CD4-positive, alpha-beta memory T cell (primary cell): ENCODE measurements at regions of chr11 and their contacts with region 1.

Region 1: DNA sequence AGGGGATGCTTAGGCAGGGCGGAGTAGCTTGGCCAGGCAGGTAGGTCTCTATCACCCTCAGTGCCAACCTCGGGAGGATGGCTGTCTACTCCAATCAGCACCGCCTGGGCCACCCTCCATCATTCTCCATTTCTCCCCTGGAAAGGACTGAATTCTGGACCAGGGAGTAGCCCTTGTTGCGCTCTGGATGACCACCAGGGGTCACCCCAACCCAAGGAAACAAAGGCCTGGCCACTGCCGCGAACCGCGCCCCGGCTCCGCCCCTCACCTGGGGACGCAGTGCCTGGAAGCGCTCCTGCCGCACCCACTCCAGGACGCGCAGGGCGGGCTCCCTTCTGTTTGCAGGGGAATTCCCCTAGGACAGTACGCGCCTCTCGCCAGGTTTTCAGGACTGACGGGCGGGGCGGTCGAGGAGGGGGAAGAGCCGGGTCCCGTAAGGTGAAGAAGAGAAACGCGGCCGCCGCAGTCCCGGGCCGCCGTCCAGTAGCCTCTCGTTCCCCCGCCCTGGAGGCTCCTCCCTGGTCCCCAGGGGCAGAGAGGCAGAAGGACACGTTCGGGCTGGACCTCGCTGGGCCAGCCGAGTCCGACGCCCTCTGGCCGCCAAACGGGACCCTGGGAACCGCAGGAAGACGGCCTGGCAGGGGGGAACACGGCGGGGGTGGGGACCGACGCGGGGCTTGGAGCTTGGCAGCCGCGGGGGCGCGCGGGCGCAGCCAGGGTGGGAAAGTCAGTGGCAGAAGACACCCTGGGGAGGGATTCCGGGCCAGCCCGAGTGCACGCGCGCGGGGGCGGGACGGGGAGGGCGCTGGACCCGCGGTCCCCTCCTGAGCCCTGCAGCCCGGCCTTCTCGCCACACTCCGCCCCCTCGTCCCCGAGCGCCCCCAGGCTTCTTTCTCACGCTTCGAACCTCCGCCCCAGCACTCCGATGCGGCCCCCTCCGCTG is 7.1 kb downstream of the SCN4B start:
- DNase-seq: peak; percentile 81 to 90 (median 86)
- H3K4me3 ChIP-seq: peak overlapping the region; percentile 43 to 62
- H3K4me3 Mint-ChIP-seq: peak overlapping the region; percentile 63 to 93 (median 85)
- H3K27ac ChIP-seq: no peak overlapping the region
- H3K27ac Mint-ChIP-seq: peak overlapping the region in 4 of 7 donors; percentile 41 to 88 (median 78)
- H3K4me1 ChIP-seq: peaks cover 4% of the 10 kb centered on the region
- H3K4me1 Mint-ChIP-seq: peaks cover 2 to 5% (median 4%) of the 10 kb centered on the region in 4 donors
- H3K27me3 ChIP-seq: peaks cover 13% of the 10 kb centered on the region
- H3K27me3 Mint-ChIP-seq: peaks cover 34 to 46% of the 10 kb centered on the region in 2 donors

Region 2: GRCh38 chr11:118290923-118291322 is 145.4 kb after region 1 on chr11:
- CTCF ChIA-PET with region 1: interaction called, 12 read pairs
- POLR2A ChIA-PET with region 1: interaction called, 3 read pairs
- intact Hi-C with region 1: loop called (anchors 1 kb)
- DNase-seq: peak; percentile 46 to 61 (median 49)
- H3K4me3 ChIP-seq: no peak overlapping the region
- H3K4me3 Mint-ChIP-seq: peak overlapping the region in 1 of 8 donors; percentile 40
- H3K27ac ChIP-seq: no peak overlapping the region
- H3K27ac Mint-ChIP-seq: peak overlapping the region in 2 of 7 donors; percentile 18 to 36
- H3K4me1 ChIP-seq: peaks cover 4% of the 10 kb centered on the region
- H3K4me1 Mint-ChIP-seq: peaks cover 8 to 13% (median 10%) of the 10 kb centered on the region in 4 donors
- H3K27me3 ChIP-seq: no peaks in the 10 kb centered on the region
- H3K27me3 Mint-ChIP-seq: no peaks in the 10 kb centered on the region

Region 3: GRCh38 chr11:118353084-118353710 is 207.6 kb after region 1 on chr11:
- CTCF ChIA-PET with region 1: no interaction called
- POLR2A ChIA-PET with region 1: no interaction called
- intact Hi-C with region 1: loop called (anchors 5 kb)
- DNase-seq: peak in 4 of 5 donors; percentile 53 to 64 (median 63)
- H3K4me3 ChIP-seq: no peak overlapping the region
- H3K4me3 Mint-ChIP-seq: no peak overlapping the region
- H3K27ac ChIP-seq: peak overlapping the region; percentile 44
- H3K27ac Mint-ChIP-seq: peak overlapping the region; percentile 86 to 96 (median 93)
- H3K4me1 ChIP-seq: peaks cover 22% of the 10 kb centered on the region
- H3K4me1 Mint-ChIP-seq: peaks cover 22 to 29% (median 24%) of the 10 kb centered on the region in 4 donors
- H3K27me3 ChIP-seq: no peaks in the 10 kb centered on the region
- H3K27me3 Mint-ChIP-seq: no peaks in the 10 kb centered on the region

Region 4: GRCh38 chr11:118488480-118489109 is 343.0 kb after region 1 on chr11:
- CTCF ChIA-PET with region 1: interaction called, 4 read pairs
- POLR2A ChIA-PET with region 1: no interaction called
- intact Hi-C with region 1: loop called (anchors 1 kb)
- DNase-seq: peak; percentile 79 to 83 (median 81)
- H3K4me3 ChIP-seq: no peak overlapping the region
- H3K4me3 Mint-ChIP-seq: no peak overlapping the region
- H3K27ac ChIP-seq: peak overlapping the region; percentile 10
- H3K27ac Mint-ChIP-seq: peak overlapping the region; percentile 1 to 79 (median 13)
- H3K4me1 ChIP-seq: no peaks in the 10 kb centered on the region
- H3K4me1 Mint-ChIP-seq: peaks cover 0 to 5% (median 4%) of the 10 kb centered on the region in 4 donors
- H3K27me3 ChIP-seq: no peaks in the 10 kb centered on the region
- H3K27me3 Mint-ChIP-seq: no peaks in the 10 kb centered on the region

Region 5: GRCh38 chr11:118565051-118565450 is 419.5 kb after region 1 on chr11:
- CTCF ChIA-PET with region 1: no interaction called
- POLR2A ChIA-PET with region 1: no interaction called
- intact Hi-C with region 1: loop called (anchors 1 kb)
- DNase-seq: no peak
- H3K4me3 ChIP-seq: no peak overlapping the region
- H3K4me3 Mint-ChIP-seq: peak overlapping the region; percentile 50 to 90 (median 70)
- H3K27ac ChIP-seq: no peak overlapping the region
- H3K27ac Mint-ChIP-seq: peak overlapping the region; percentile 54 to 92 (median 82)
- H3K4me1 ChIP-seq: peaks cover 5% of the 10 kb centered on the region
- H3K4me1 Mint-ChIP-seq: peaks cover 12 to 20% (median 17%) of the 10 kb centered on the region in 4 donors
- H3K27me3 ChIP-seq: no peaks in the 10 kb centered on the region
- H3K27me3 Mint-ChIP-seq: no peaks in the 10 kb centered on the region

Region 6: GRCh38 chr11:118610804-118611795 is 465.5 kb after region 1 on chr11:
- CTCF ChIA-PET with region 1: interaction called, 4 read pairs
- POLR2A ChIA-PET with region 1: no interaction called
- intact Hi-C with region 1: loop called (anchors 1 kb)
- DNase-seq: peak; percentile 79 to 87 (median 83)
- H3K4me3 ChIP-seq: peak overlapping the region; percentile 29 to 54
- H3K4me3 Mint-ChIP-seq: peak overlapping the region; percentile 65 to 86 (median 78)
- H3K27ac ChIP-seq: peak overlapping the region; percentile 67
- H3K27ac Mint-ChIP-seq: peak overlapping the region in 5 of 7 donors; percentile 45 to 94 (median 74)
- H3K4me1 ChIP-seq: peaks cover 24% of the 10 kb centered on the region
- H3K4me1 Mint-ChIP-seq: peaks cover 15 to 35% (median 21%) of the 10 kb centered on the region in 4 donors
- H3K27me3 ChIP-seq: no peaks in the 10 kb centered on the region
- H3K27me3 Mint-ChIP-seq: peaks cover 4% of the 10 kb centered on the region in 2 donors